ENCODE measurements at regions of chr19 and their contacts with region 1.

Region 1: GRCh38 chr19:38095411-38096308 is 128.4 kb downstream of the DPF1 start:
- DNase-seq: peak; percentile 58 to 88 (median 80)
- ATAC-seq: peak in 1 of 2 donors; percentile 71
- H3K4me3 ChIP-seq: no peak overlapping the region
- H3K27ac ChIP-seq: no peak overlapping the region
- H3K4me1 ChIP-seq: no peaks in the 10 kb centered on the region
- H3K27me3 ChIP-seq: no peaks in the 10 kb centered on the region

Region 2: DNA sequence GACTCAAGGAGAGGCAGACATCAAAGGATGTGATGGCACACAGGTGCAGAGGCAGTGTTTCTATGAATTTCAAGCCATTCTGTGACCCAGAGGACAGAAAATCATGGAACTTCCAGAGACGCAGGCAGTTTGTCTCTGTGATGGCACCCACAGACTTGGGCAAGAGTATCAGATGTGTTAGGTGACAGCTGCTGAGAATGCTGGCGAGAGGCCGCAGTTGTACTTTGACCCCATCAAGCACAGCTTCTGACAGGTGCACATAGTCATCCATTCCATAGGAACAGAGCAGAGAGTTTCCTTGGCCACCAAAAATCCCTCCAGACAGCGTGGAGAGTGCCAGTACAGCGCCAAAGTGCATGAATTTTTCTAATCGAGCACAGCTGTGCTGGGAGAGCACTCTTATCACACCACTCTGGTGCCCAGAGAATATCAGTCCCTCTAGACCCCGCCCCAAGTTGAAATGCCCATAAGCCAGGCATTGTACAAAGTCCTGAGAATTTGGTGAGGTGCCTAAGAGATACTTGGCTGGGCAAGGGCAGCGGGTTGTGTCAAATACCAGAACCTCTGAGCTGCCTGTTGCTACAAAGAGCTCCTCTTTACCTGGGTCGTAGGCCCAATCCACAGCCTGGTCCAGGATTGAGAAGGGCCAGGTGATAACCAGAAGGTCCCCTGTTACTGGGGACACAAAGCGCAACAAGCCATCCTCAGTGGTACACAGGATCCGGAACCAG is 201.7 kb before region 1 on chr19:
- intact Hi-C with region 1: loop called in 2 of 4 experiments (anchors 5 to 10 kb)
- DNase-seq: no peak
- ATAC-seq: no peak
- H3K4me3 ChIP-seq: no peak overlapping the region
- H3K27ac ChIP-seq: no peak overlapping the region
- H3K4me1 ChIP-seq: no peaks in the 10 kb centered on the region
- H3K27me3 ChIP-seq: no peaks in the 10 kb centered on the region

Measured in right cardiac atrium (tissue), 5 donors.